Activated CD4-positive, alpha-beta T cell treated with anti-CD3 and anti-CD28 coated beads, Interleukin-2, amount 10 ng/mL, durations not matched to agents 24 days and 14 days (primary cell): ENCODE measurements at regions of chr10 and their contacts with region 1.

Region 1: GRCh38 chr10:110354322-110354766 is 49.6 kb upstream of the SMNDC1 start:
- DNase-seq: peak; percentile 94
- H3K4me3 Mint-ChIP-seq: peak overlapping the region; percentile 89
- H3K27ac Mint-ChIP-seq: peak overlapping the region; percentile 99
- H3K4me1 Mint-ChIP-seq: peaks cover 65% of the 10 kb centered on the region
- H3K27me3 Mint-ChIP-seq: no peaks in the 10 kb centered on the region

Region 2: DNA sequence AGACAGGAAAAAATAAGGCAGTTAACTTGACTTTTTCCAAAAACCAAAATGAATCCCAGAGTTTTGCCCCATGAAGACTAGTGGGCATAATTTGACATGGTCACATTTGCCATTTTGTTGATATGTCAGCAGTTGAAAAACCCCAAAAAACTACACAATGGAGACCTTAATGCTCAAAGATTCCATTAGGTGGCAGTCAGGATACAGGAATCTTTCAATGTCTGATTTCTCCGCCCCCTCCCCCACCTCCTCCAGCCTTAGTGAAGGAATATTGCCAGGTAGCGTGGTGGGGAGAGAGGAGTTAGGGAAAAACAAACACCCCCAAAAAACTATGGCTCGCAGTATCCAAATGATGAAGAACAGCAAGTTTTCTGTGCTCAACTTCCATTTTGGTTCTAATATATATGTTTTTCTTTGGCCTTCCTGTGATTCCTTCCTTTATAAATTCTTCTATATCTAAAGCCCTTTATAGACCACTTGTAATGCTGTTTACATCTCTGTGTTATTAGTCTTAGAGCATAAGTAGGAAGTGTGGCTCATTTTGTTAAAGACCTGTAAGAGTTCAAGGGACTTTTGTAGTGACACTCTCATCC is 42.9 kb before region 1 on chr10:
- intact Hi-C with region 1: loop called (anchors 1 kb)
- DNase-seq: peak; percentile 74
- H3K4me3 Mint-ChIP-seq: no peak overlapping the region
- H3K27ac Mint-ChIP-seq: no peak overlapping the region
- H3K4me1 Mint-ChIP-seq: peaks cover 34% of the 10 kb centered on the region
- H3K27me3 Mint-ChIP-seq: no peaks in the 10 kb centered on the region

Region 3: GRCh38 chr10:110335314-110336064 is 18.9 kb before region 1 on chr10:
- intact Hi-C with region 1: loop called (anchors 1 kb)
- DNase-seq: peak; percentile 59
- H3K4me3 Mint-ChIP-seq: peak overlapping the region; percentile 57
- H3K27ac Mint-ChIP-seq: peak overlapping the region; percentile 75
- H3K4me1 Mint-ChIP-seq: peaks cover 32% of the 10 kb centered on the region
- H3K27me3 Mint-ChIP-seq: no peaks in the 10 kb centered on the region

Region 4: GRCh38 chr10:110395725-110396651 is 41.6 kb after region 1 on chr10:
- intact Hi-C with region 1: loop called (anchors 1 kb)
- DNase-seq: peak; percentile 84
- H3K4me3 Mint-ChIP-seq: peak overlapping the region; percentile 13
- H3K27ac Mint-ChIP-seq: peak overlapping the region; percentile 87
- H3K4me1 Mint-ChIP-seq: peaks cover 57% of the 10 kb centered on the region
- H3K27me3 Mint-ChIP-seq: no peaks in the 10 kb centered on the region

Region 5: DNA sequence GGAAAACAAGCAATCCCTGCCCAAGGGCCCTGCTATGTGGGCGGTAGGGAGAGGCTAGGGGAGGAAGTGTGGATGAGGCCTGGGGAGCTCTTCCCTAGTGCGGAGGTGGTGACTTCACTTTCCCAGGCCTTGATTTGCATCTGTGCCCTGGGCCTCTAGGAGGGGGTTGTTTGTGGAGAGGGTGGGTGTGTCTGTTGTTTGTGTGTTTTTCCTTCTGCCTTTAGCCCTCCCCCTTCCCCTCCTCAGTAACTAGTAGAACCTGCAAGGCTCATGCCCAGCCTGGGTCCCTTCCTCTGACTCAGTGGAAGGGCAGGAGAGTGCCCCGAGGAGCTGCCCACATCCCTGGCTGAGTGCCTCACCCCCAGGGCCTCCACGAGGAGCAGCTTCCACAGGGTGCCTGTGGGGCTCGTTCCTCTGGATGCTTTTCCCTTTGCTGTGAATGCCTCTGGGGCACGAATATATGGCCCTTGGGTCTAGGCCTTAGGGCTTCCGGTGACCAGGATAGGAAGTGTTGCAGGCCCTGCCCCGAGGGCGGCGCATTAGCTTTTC is 53.9 kb after region 1 on chr10:
- intact Hi-C with region 1: no loop called
- DNase-seq: no peak
- H3K4me3 Mint-ChIP-seq: no peak overlapping the region
- H3K27ac Mint-ChIP-seq: no peak overlapping the region
- H3K4me1 Mint-ChIP-seq: peaks cover 47% of the 10 kb centered on the region
- H3K27me3 Mint-ChIP-seq: peaks cover 6% of the 10 kb centered on the region

Region 6: GRCh38 chr10:110425684-110426293 is 71.4 kb after region 1 on chr10:
- intact Hi-C with region 1: loop called (anchors 1 kb)
- DNase-seq: peak; percentile 82
- H3K4me3 Mint-ChIP-seq: peak overlapping the region; percentile 51
- H3K27ac Mint-ChIP-seq: peak overlapping the region; percentile 92
- H3K4me1 Mint-ChIP-seq: peaks cover 55% of the 10 kb centered on the region
- H3K27me3 Mint-ChIP-seq: no peaks in the 10 kb centered on the region

Region 7: DNA sequence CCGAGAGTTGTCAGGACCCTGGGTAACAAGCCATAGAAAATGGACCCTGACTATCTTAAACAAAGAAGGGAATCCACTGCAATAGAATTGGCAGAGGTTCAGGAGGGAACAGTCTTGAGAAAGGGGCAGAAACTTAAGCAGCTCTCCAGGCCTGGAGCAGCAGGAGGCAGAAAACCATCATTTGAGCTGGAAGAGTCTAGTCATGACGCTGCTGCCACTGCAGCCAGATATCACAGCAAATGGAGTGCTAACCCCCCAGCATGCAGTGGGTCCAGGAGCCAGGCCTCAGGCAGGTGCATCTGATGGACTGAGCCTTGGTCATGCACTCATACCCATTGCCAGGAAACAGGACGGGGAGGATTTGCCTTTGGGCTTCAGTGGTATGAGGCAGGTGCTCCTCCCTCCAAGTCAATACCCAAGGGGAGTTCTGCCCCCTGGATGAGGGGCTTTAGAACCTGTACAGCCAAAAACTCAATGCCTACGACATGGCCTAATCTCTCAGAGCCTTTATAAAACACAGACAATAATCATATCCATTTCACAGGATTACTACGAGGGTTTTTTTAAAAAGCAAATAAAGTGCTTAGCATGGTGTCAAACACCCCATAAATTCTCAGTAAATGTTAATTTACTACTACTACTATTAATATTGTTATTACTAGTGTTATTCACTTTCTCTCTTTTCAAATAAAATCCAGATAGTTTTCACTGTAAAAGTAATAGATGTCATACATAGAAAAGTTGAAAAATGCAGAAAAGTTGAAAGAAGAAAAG is 174.1 kb after region 1 on chr10:
- intact Hi-C with region 1: loop called (anchors 1 kb)
- DNase-seq: no peak
- H3K4me3 Mint-ChIP-seq: peak overlapping the region; percentile 57
- H3K27ac Mint-ChIP-seq: peak overlapping the region; percentile 84
- H3K4me1 Mint-ChIP-seq: peaks cover 69% of the 10 kb centered on the region
- H3K27me3 Mint-ChIP-seq: no peaks in the 10 kb centered on the region

Region 8: GRCh38 chr10:110547139-110547761 is 192.9 kb after region 1 on chr10:
- intact Hi-C with region 1: loop called (anchors 1 kb)
- DNase-seq: peak; percentile 77
- H3K4me3 Mint-ChIP-seq: peak overlapping the region; percentile 47
- H3K27ac Mint-ChIP-seq: peak overlapping the region; percentile 10
- H3K4me1 Mint-ChIP-seq: peaks cover 19% of the 10 kb centered on the region
- H3K27me3 Mint-ChIP-seq: peaks cover 28% of the 10 kb centered on the region